ENCODE measurements at regions of chr4 and their contacts with region 1.

Region 1: DNA sequence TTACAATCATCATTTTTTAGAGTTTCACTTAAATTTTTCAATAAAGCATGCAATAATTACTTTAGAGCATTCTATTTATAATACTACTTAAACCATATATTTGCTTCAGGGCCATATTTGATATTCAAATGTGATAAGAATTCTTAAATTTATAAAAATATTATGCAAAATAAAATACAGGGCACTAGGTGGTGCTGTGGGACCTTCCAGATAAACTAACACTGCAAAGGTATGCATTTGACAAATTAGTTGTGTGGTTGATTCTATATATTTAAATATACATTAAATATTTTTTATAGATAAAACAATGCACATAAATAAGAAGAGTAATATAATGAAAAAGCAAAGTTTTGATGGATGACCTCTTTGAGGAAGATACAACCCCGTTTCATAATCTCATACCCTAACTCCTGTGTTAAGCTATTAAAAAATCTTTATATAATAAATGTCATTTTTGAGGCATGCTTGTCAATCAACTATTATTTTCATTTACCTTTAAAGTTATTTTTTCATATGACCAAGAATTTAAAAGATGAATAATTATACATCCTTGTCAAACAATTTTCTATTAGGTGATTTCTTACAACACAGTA is 128.4 kb downstream of the REELD1 start:
- DNase-seq: no peak
- ATAC-seq: no peak

Region 2: GRCh38 chr4:146916479-146917076 is 573.9 kb after region 1 on chr4:
- intact Hi-C with region 1: loop called in 1 of 2 experiments (anchors 10 kb)
- DNase-seq: peak in 1 of 2 donors; percentile 5
- ATAC-seq: peak; percentile 41

Region 3: GRCh38 chr4:147096667-147097604 is 754.2 kb after region 1 on chr4:
- intact Hi-C with region 1: loop called in 1 of 2 experiments (anchors 10 kb)
- DNase-seq: no peak
- ATAC-seq: peak; percentile 38